Caco-2 (cell line): ENCODE measurements at regions of chr12 and their contacts with region 1.

Region 1: DNA sequence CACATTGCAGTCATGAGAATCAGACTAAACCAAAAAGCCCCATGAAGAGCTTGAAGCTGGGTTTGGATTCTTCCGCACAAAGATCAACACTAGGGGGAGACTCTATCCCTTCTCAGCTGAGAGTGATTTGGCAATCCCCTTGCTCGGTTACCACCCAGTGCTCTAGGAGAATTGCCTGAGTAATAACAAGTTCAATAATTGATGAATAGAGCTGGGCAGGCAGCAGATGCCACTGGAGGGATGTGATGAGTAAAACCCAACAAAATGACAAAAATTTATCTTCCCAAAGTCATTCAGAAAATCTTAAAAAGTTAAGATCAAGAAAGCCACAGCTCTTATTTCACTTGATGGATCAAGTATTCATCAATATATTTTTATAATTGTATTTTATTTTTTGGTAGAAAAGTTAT is 185.6 kb upstream of the ARID2 start:
- DNase-seq: peak; percentile 66 to 79
- H3K4me3 ChIP-seq: no peak overlapping the region
- H3K4me3 Mint-ChIP-seq: no peak overlapping the region
- H3K27ac Mint-ChIP-seq: no peak overlapping the region
- H3K4me1 ChIP-seq: peaks cover 20% of the 10 kb centered on the region
- H3K4me1 Mint-ChIP-seq: peaks cover 32% of the 10 kb centered on the region
- H3K27me3 ChIP-seq: no peaks in the 10 kb centered on the region
- H3K27me3 Mint-ChIP-seq: no peaks in the 10 kb centered on the region
- CTCF ChIP-seq: peak; percentile 91 to 93

Region 2: GRCh38 chr12:45130881-45131281 is 413.0 kb before region 1 on chr12:
- CTCF ChIA-PET with region 1: no interaction called
- POLR2A ChIA-PET with region 1: no interaction called
- intact Hi-C with region 1: loop called (anchors 5 kb)
- DNase-seq: peak; percentile 65 to 74
- H3K4me3 ChIP-seq: no peak overlapping the region
- H3K4me3 Mint-ChIP-seq: no peak overlapping the region
- H3K27ac Mint-ChIP-seq: no peak overlapping the region
- H3K4me1 ChIP-seq: no peaks in the 10 kb centered on the region
- H3K4me1 Mint-ChIP-seq: no peaks in the 10 kb centered on the region
- H3K27me3 ChIP-seq: no peaks in the 10 kb centered on the region
- H3K27me3 Mint-ChIP-seq: no peaks in the 10 kb centered on the region
- CTCF ChIP-seq: peak; percentile 77 to 85

Region 3: DNA sequence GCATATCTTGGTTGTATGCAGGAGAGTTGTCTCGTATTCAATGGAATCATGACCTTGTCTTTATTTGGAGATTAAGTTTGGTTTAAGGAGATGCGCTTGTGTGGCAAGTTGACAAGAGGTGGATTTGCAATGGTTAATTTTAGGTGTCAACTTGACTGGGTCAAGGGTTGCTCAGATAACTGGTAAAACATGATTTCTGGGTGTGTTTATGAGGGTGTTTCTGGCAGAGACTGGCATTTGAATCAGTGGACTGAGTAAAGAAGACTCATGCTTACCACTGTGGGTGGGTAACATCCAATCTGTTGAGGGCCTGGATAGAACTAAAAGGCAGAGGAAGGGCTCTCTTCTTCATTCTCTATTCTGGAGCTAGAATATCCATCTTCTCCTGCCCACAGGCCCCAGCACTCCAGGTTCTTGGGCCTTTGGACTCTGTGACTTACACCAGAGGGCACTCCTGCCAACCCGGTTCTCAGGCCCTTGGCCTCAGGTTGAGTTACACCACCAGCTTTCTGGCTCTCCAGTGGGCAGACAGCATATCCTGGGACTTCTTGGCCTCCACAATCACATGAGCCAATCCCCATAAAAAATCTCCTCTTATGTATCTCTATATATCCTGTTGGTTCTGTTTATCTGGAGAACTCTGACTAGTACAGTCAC is 44.1 kb after region 1 on chr12:
- CTCF ChIA-PET with region 1: interaction called, 4 read pairs
- POLR2A ChIA-PET with region 1: no interaction called
- intact Hi-C with region 1: loop called (anchors 1 kb)
- DNase-seq: no peak
- H3K4me3 ChIP-seq: no peak overlapping the region
- H3K4me3 Mint-ChIP-seq: no peak overlapping the region
- H3K27ac Mint-ChIP-seq: no peak overlapping the region
- H3K4me1 ChIP-seq: peaks cover 15% of the 10 kb centered on the region
- H3K4me1 Mint-ChIP-seq: peaks cover 22% of the 10 kb centered on the region
- H3K27me3 ChIP-seq: no peaks in the 10 kb centered on the region
- H3K27me3 Mint-ChIP-seq: no peaks in the 10 kb centered on the region
- CTCF ChIP-seq: no peak

Region 4: DNA sequence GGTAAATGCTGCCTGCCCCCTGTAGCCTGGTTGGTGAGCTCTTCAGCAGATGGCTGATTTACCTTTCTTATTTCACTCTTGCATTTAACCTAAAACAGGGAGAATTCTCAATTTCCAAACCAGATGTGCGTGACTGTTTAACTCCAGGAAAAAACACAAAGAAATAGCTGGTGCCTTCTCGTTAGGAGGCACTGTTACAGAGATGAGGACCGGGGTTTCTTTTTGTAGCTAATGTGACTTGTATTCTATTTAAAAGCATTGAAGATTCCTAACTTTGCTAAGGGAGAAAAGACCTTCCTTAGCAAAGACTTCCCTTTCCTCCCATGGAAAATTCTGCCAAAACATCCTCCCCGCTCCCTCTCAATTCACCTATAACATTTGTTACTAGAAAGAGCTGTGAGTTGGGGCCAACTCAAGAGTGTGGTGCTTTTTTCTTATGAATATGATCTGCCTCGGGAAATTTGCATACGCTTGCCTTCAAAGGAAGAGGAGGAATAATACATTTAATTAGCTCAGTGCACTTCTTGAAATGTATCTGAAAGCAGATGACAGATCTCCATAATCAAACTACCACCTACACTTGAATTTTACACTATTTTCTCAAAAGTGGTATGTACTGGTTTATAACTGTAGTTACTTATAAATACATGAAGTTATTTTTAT is 83.6 kb after region 1 on chr12:
- CTCF ChIA-PET with region 1: interaction called, 3 read pairs
- POLR2A ChIA-PET with region 1: no interaction called
- intact Hi-C with region 1: loop called (anchors 5 kb)
- DNase-seq: no peak
- H3K4me3 ChIP-seq: no peak overlapping the region
- H3K4me3 Mint-ChIP-seq: no peak overlapping the region
- H3K27ac Mint-ChIP-seq: no peak overlapping the region
- H3K4me1 ChIP-seq: peaks cover 7% of the 10 kb centered on the region; the same call in 1 of the 2 replicates
- H3K4me1 Mint-ChIP-seq: peaks cover 10% of the 10 kb centered on the region
- H3K27me3 ChIP-seq: no peaks in the 10 kb centered on the region
- H3K27me3 Mint-ChIP-seq: no peaks in the 10 kb centered on the region
- CTCF ChIP-seq: no peak

Region 5: DNA sequence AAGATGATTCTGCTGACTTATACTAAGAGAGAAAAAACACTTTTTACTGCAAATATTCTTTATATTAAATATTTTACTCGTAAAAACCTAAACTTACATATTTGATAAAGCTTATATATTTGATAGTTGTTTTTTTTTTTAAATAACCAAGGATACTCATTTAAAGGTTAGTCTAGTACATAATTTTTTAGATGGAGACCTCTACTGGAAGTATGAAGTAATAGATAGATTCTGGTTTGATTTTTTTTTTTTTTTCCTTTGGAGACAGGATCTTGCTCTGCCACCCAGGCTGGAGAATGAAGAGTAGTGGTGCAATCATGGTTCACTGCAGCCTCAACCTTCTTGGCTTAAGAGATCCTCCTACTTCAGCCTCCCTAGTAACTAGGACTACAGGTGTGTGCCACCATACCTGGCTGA is 202.0 kb after region 1 on chr12:
- CTCF ChIA-PET with region 1: interaction called, 7 read pairs
- POLR2A ChIA-PET with region 1: no interaction called
- intact Hi-C with region 1: loop called (anchors 1 kb)
- DNase-seq: no peak
- H3K4me3 ChIP-seq: no peak overlapping the region
- H3K4me3 Mint-ChIP-seq: no peak overlapping the region
- H3K27ac Mint-ChIP-seq: no peak overlapping the region
- H3K4me1 ChIP-seq: no peaks in the 10 kb centered on the region; the same call in 1 of the 2 replicates
- H3K4me1 Mint-ChIP-seq: peaks cover 9% of the 10 kb centered on the region
- H3K27me3 ChIP-seq: no peaks in the 10 kb centered on the region
- H3K27me3 Mint-ChIP-seq: no peaks in the 10 kb centered on the region
- CTCF ChIP-seq: peak; percentile 23 to 36